Ovary (tissue), 10 donors: ENCODE measurements at regions of chr6 and their contacts with region 1.

Region 1: DNA sequence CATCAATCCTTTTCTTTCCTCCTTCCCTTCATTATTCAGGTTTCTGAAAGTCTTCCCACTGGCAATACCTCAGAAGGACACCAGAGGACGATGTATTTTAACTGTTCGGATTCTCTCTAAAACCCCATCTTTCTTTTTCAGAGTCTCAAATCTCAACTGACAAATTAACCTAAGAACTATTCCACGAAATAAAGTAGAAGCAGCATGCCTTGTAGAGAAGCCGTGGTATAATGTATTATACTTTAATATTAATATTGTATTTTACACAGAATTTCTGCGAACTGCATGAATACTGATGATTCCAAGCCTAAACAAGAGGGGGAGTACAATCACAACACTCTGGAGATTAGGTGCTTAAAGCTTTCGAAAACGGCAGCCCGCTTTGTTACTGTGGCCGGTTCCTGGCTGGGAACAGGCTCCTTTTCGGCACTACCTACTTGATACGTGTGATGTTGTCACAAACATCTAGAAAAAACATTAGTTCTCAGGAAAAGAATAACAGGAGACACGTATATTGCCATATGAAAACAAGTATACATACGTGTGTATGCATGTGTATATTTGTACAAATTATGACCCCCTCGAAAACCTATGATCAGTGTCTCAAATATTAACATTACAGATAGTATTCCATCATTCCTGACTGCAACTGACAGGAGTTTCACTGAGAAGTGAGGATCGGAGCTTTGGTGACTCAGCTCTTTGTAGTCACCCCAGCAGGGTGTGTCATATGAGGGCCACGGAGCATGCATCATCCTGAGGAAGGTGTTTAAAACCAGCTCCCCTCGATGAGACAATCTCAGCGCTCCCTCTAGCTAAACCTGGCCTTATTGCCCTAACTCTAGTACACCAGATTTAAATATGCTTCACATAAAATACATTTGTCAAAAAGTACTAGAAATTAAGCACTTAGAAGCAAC is 319.7 kb upstream of the TCF21 start:
- DNase-seq: peak; percentile 44 to 57 (median 50)
- H3K4me3 ChIP-seq: peak overlapping the region; percentile 27
- H3K27ac ChIP-seq: peak overlapping the region in 1 of 2 donors; percentile 53
- H3K4me1 ChIP-seq: peaks cover 1% of the 10 kb centered on the region
- H3K27me3 ChIP-seq: no peaks in the 10 kb centered on the region
- CTCF ChIP-seq: peak; percentile 94 to 99 (median 97)
- EP300 ChIP-seq: no peak
- POLR2A ChIP-seq: no peak

Region 2: GRCh38 chr6:133114973-133115372 is 454.3 kb before region 1 on chr6:
- intact Hi-C with region 1: no loop called
- DNase-seq: no peak
- H3K4me3 ChIP-seq: no peak overlapping the region
- H3K27ac ChIP-seq: no peak overlapping the region
- H3K4me1 ChIP-seq: no peaks in the 10 kb centered on the region
- H3K27me3 ChIP-seq: no peaks in the 10 kb centered on the region
- CTCF ChIP-seq: no peak
- EP300 ChIP-seq: no peak
- POLR2A ChIP-seq: no peak

Region 3: DNA sequence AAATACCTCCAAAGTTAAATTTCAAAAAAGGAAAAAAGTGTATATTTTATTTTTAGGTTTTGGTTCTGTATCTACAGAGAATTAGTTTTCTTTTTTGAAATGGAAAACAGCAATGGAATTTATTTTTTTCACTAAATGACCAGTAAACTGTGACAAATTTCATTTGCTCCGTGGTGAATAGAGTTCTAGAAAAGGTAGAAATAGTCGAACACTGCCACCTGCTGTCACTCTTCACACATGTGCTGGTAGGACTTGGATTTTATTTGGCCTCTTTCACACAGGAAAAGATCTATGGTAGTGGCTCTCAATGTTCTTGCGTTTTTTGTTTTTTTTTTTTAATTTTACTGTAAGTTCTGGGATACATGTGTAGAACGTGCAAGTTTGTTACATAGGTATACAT is 15.6 kb before region 1 on chr6:
- intact Hi-C with region 1: no loop called
- DNase-seq: peak in 4 of 5 donors; percentile 39 to 65 (median 44)
- H3K4me3 ChIP-seq: no peak overlapping the region
- H3K27ac ChIP-seq: no peak overlapping the region
- H3K4me1 ChIP-seq: peaks cover 5% of the 10 kb centered on the region
- H3K27me3 ChIP-seq: no peaks in the 10 kb centered on the region
- CTCF ChIP-seq: peak; percentile 46 to 52 (median 47)
- EP300 ChIP-seq: no peak
- POLR2A ChIP-seq: no peak

Region 4: DNA sequence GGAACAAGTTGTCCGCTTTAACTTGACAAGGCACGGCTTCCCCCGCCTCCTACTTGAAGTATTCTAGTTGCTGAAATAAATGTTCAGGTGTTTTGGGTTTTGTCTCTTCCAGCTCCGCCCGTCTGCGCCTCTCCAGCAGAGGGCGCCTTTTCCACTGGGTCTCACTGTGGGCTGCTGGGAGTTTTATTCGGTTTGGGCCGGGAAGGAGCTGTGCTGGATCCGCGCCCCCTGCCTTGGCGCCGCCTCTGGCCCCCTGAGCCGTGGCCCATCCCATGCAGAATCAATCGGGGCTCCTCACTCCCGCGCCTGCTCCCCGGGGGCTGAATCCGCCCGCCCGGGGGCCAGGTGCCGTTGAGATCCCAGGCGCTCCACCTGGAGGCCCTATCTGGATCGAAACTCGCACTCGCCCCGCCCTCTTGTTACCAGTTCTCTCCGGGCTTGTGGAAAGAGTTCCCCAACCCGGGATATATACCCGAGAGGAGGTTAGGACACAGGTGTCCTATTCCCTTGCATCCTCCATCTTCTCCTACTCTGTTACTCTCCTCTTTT is 268.6 kb after region 1 on chr6:
- intact Hi-C with region 1: loop called in 2 of 4 experiments (anchors 2 to 10 kb)
- DNase-seq: peak in 4 of 5 donors; percentile 36 to 62 (median 60)
- H3K4me3 ChIP-seq: peak overlapping the region; percentile 33
- H3K27ac ChIP-seq: no peak overlapping the region
- H3K4me1 ChIP-seq: peaks cover 5% of the 10 kb centered on the region
- H3K27me3 ChIP-seq: no peaks in the 10 kb centered on the region
- CTCF ChIP-seq: peak in 2 of 3 donors; percentile 24
- EP300 ChIP-seq: no peak
- POLR2A ChIP-seq: no peak

Region 5: GRCh38 chr6:133916650-133917151 is 347.5 kb after region 1 on chr6:
- intact Hi-C with region 1: loop called (anchors 2 to 5 kb)
- DNase-seq: peak; percentile 91 to 97 (median 95)
- H3K4me3 ChIP-seq: no peak overlapping the region
- H3K27ac ChIP-seq: no peak overlapping the region
- H3K4me1 ChIP-seq: no peaks in the 10 kb centered on the region
- H3K27me3 ChIP-seq: no peaks in the 10 kb centered on the region
- CTCF ChIP-seq: peak; percentile 77 to 87 (median 78)
- EP300 ChIP-seq: no peak
- POLR2A ChIP-seq: no peak

Region 6: DNA sequence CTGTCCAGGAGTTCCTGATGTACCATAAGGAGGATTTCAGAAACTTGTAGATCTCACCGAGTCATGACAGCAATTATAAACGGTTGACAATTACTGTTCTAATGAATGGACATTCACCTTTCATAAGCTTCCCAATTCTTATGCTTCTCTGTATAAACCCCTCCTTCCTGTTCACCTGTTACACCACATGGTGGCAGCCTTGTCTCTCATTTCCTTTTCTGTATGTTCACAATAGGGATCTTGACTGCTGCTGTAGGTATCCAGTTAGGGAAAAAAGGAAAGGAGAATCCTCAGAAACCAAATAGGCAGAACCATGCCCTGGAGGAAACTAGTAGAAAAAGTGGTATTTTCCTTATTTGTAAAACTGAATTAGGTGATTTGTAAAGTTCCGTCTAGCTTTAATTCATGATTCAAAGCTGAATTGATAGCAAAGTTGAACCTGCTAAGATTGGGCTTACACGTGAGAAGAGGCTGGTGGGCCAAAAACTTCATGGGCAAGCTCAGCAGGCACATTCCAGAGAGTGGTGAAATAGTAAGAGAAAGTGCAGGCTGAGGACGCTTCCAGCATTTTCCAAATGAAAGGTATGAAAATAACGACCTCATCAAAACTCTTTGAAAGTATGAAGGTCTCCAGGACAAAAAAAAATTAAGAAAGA is 354.8 kb after region 1 on chr6:
- intact Hi-C with region 1: loop called (anchors 2 to 5 kb)
- DNase-seq: peak; percentile 51 to 82 (median 58)
- H3K4me3 ChIP-seq: no peak overlapping the region
- H3K27ac ChIP-seq: no peak overlapping the region
- H3K4me1 ChIP-seq: no peaks in the 10 kb centered on the region
- H3K27me3 ChIP-seq: no peaks in the 10 kb centered on the region
- CTCF ChIP-seq: peak; percentile 57 to 91 (median 84)
- EP300 ChIP-seq: no peak
- POLR2A ChIP-seq: no peak

Region 7: GRCh38 chr6:134105924-134106323 is 536.7 kb after region 1 on chr6:
- intact Hi-C with region 1: loop called in 1 of 4 experiments (anchors 10 kb)
- DNase-seq: no peak
- H3K4me3 ChIP-seq: no peak overlapping the region
- H3K27ac ChIP-seq: no peak overlapping the region
- H3K4me1 ChIP-seq: no peaks in the 10 kb centered on the region
- H3K27me3 ChIP-seq: no peaks in the 10 kb centered on the region
- CTCF ChIP-seq: no peak
- EP300 ChIP-seq: no peak
- POLR2A ChIP-seq: no peak